ENCODE measurements at regions of chr4 and their contacts with region 1.

Region 1: GRCh38 chr4:153785910-153786721 is 2.8 kb downstream of the SFRP2 start:
- DNase-seq: no peak
- ATAC-seq: no peak
- H3K4me3 Mint-ChIP-seq: peak overlapping the region; percentile 98
- H3K27ac Mint-ChIP-seq: peak overlapping the region; percentile 92; the same call in 1 of the 2 replicates
- H3K4me1 Mint-ChIP-seq: peaks cover 54% of the 10 kb centered on the region
- H3K27me3 Mint-ChIP-seq: no peaks in the 10 kb centered on the region
- CTCF ChIP-seq: no peak; the same call in 1 of the 2 replicates

Region 2: GRCh38 chr4:153731239-153731638 is 54.9 kb before region 1 on chr4:
- CTCF ChIA-PET with region 1: no interaction called
- POLR2A ChIA-PET with region 1: no interaction called
- DNase-seq: no peak
- ATAC-seq: no peak
- H3K4me3 Mint-ChIP-seq: no peak overlapping the region
- H3K27ac Mint-ChIP-seq: no peak overlapping the region
- H3K4me1 Mint-ChIP-seq: peaks cover 8% of the 10 kb centered on the region
- H3K27me3 Mint-ChIP-seq: no peaks in the 10 kb centered on the region
- CTCF ChIP-seq: no peak

Region 3: DNA sequence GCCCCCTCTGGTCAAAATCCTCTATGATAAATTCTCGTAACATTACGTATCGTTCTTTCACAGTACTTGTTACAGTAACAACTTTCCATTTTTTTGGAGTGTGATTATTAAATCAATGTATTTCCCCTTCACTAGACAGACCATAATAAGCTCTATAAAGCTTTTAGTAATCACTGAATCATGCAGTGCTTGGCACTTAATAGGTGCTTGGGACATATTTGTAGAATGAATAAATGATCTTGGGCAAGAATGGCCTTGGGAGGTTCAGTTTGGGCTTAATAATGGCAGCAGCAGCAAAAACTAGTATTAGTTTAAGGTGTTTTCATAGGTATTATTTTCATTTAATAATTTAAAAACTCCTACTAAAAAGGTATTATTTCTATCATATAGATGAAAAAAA is 36.2 kb after region 1 on chr4:
- CTCF ChIA-PET with region 1: interaction called, 7 read pairs
- POLR2A ChIA-PET with region 1: interaction called, 10 read pairs
- DNase-seq: no peak
- ATAC-seq: no peak
- H3K4me3 Mint-ChIP-seq: no peak overlapping the region
- H3K27ac Mint-ChIP-seq: no peak overlapping the region
- H3K4me1 Mint-ChIP-seq: peaks cover 4% of the 10 kb centered on the region
- H3K27me3 Mint-ChIP-seq: no peaks in the 10 kb centered on the region
- CTCF ChIP-seq: no peak

Region 4: DNA sequence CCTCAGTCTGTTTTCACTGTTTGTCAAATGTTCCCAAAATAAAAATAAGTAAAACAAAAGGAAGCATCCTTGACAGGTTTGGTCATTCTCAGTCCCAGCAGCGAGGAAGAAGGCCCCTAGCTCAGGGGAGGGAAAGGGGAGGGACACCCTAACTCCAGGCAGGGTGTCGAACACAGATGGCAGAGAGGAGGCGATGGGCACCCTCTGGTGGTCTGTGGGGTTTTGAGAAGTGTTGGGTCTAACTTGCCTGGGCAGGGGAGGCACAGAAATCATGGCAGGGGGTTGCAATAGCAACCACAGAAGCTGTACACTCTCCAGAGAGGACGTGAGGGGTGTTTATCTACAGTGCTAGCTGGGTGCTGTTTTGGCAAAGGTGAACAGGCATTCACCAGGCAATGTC is 232.5 kb after region 1 on chr4:
- CTCF ChIA-PET with region 1: interaction called, 47 read pairs
- POLR2A ChIA-PET with region 1: interaction called, 5 read pairs
- DNase-seq: peak; percentile 67
- ATAC-seq: peak; percentile 99
- H3K4me3 Mint-ChIP-seq: no peak overlapping the region
- H3K27ac Mint-ChIP-seq: no peak overlapping the region
- H3K4me1 Mint-ChIP-seq: peaks cover 17% of the 10 kb centered on the region
- H3K27me3 Mint-ChIP-seq: no peaks in the 10 kb centered on the region
- CTCF ChIP-seq: no peak

Region 5: DNA sequence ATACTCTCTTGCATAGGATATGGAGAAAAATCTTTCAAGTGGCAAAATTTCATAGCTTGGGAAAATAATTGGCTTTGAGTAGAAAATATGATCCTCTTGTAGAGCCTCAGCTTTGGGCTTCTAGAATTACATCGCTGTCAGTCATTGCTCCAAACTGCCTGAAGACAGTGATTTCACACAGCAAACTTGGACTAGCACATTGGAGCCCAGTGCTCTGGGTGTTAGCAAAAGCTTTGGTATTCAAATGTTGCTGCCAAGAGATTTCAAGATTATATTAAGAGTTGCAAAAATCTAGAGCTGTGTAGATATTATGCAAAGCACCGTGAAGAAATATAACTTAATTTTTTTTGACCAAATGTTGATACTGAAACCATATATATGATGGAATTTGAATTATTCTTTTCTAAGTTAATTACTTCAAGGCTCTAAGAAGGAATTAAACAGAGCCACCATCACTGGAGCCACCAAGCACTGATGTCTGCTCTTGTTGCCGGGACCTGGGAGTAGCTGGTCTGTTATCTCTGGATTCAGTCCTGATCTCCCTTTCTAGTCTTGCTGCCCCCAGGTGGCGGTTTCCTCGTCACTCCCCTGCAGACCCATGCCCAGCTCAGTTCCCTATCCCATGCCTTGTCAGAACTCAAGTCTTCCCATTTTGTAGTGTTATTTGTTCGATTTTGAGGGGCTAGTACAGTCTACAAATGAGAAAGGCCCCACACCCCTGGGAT is 263.5 kb after region 1 on chr4:
- CTCF ChIA-PET with region 1: interaction called, 11 read pairs
- POLR2A ChIA-PET with region 1: no interaction called
- DNase-seq: peak; percentile 59
- ATAC-seq: peak; percentile 97
- H3K4me3 Mint-ChIP-seq: no peak overlapping the region
- H3K27ac Mint-ChIP-seq: no peak overlapping the region
- H3K4me1 Mint-ChIP-seq: peaks cover 19% of the 10 kb centered on the region
- H3K27me3 Mint-ChIP-seq: no peaks in the 10 kb centered on the region; the same call in 1 of the 2 replicates
- CTCF ChIP-seq: no peak

Region 6: DNA sequence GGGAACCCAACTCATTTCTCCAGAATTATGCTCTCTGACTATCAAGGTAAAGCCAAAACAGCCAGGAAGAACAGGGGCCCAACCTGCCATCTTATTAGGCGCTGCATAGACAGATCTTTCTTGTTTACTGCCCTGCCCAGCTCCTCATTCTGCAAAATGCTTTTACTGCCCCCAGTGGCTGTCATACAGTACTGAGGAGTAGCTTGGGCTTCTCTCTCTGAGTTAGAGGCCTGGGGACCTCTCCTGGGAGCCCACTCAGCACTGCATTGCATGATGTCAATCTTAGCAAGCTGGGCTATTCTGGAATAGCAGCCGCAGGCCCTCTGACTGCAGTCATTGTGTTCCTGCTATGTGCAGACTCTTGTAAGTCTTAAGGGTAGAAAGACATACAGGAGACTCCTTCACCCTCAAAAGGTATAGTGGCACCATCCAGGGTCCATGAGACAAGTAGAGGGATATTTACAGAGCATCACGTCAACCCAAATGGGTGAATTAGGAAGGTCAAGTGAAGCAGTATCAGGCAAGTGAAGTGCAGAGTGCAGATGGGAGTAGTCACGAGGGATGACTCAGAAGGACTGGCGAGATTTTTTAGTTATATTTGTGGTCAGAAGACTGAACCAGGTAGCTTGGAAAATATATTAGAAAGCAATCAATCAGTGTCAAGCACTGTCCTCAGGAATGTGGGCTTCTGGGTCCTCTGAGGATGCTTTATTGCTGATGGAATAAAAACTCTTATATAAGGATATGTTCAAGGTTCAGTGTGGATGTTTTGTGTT is 296.8 kb after region 1 on chr4:
- CTCF ChIA-PET with region 1: interaction called, 12 read pairs
- POLR2A ChIA-PET with region 1: no interaction called
- DNase-seq: peak; percentile 58
- ATAC-seq: peak; percentile 100
- H3K4me3 Mint-ChIP-seq: no peak overlapping the region
- H3K27ac Mint-ChIP-seq: peak overlapping the region; percentile 10; the same call in 1 of the 2 replicates
- H3K4me1 Mint-ChIP-seq: peaks cover 13% of the 10 kb centered on the region
- H3K27me3 Mint-ChIP-seq: no peaks in the 10 kb centered on the region
- CTCF ChIP-seq: peak; percentile 59

Region 7: DNA sequence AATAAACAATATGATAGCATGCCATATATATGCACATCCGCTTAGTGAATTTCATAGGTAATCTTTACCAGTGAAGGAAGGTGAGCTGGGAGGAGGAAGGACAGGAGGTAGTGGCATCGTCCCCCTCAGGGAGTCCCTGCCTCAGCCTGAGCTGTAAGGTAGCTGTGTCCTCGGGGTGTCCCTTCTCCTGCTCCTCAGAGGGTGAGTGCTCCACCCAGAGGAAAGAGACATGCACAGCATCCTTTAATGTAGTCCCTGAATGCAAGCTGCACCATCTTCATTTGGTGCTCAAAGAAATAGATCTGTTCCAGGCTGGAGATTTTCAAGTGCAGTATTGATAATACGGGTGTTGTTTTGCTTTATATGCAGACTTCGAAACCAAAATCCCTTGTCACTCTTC is 333.2 kb after region 1 on chr4:
- CTCF ChIA-PET with region 1: interaction called, 15 read pairs
- POLR2A ChIA-PET with region 1: no interaction called
- DNase-seq: peak; percentile 32
- ATAC-seq: peak; percentile 89
- H3K4me3 Mint-ChIP-seq: no peak overlapping the region
- H3K27ac Mint-ChIP-seq: no peak overlapping the region
- H3K4me1 Mint-ChIP-seq: no peaks in the 10 kb centered on the region
- H3K27me3 Mint-ChIP-seq: no peaks in the 10 kb centered on the region; the same call in 1 of the 2 replicates
- CTCF ChIP-seq: 0 out of 2 replicates have a peak, but pooled peaks have one; percentile 15